CD8-positive, alpha-beta T cell (primary cell): ENCODE measurements at regions of chr4 and their contacts with region 1.

Region 1: GRCh38 chr4:99054428-99054994 is 34.1 kb downstream of the ADH5 start:
- DNase-seq: no peak
- ATAC-seq: no peak
- H3K4me3 ChIP-seq: no peak overlapping the region
- H3K4me3 Mint-ChIP-seq: no peak overlapping the region
- H3K27ac ChIP-seq: peak overlapping the region in 1 of 2 experiments; percentile 15
- H3K27ac Mint-ChIP-seq: peak overlapping the region; percentile 42
- H3K4me1 ChIP-seq: peaks cover 3% of the 10 kb centered on the region
- H3K4me1 Mint-ChIP-seq: peaks cover 7% of the 10 kb centered on the region
- H3K27me3 ChIP-seq: no peaks in the 10 kb centered on the region
- H3K27me3 Mint-ChIP-seq: no peaks in the 10 kb centered on the region
- CTCF ChIP-seq: no peak

Region 2: DNA sequence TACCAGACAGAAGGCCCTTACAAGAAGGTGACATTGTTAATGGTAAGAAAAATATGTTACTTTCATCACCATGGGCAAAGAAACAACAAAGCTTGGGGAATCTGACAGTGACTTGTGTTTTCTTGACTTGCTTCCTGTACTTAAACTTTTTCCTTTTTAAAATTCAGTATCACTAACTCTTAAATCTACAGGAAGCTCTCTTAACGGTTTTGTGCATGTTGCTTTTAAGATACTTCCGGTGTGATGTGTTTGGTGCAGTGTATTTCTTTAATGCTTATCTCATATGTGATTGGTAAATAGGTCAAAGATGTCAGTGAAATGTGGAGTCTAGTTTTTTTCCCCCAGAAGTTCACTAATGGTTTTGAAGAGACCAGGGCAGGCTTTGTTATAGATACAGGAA is 11.2 kb before region 1 on chr4:
- CTCF ChIA-PET with region 1: interaction called, 17 read pairs
- POLR2A ChIA-PET with region 1: interaction called, 6 read pairs
- intact Hi-C with region 1: loop called in 1 of 2 experiments (anchors 2 kb)
- DNase-seq: peak in 2 of 9 experiments; percentile 54 to 75
- ATAC-seq: peak; percentile 96
- H3K4me3 ChIP-seq: no peak overlapping the region
- H3K4me3 Mint-ChIP-seq: peak overlapping the region; percentile 20
- H3K27ac ChIP-seq: peak overlapping the region; percentile 54 to 85
- H3K27ac Mint-ChIP-seq: peak overlapping the region; percentile 84
- H3K4me1 ChIP-seq: peaks cover 20% of the 10 kb centered on the region
- H3K4me1 Mint-ChIP-seq: peaks cover 19% of the 10 kb centered on the region
- H3K27me3 ChIP-seq: no peaks in the 10 kb centered on the region
- H3K27me3 Mint-ChIP-seq: no peaks in the 10 kb centered on the region
- CTCF ChIP-seq: no peak